Sciatic nerve (tissue), 2 donors: ENCODE measurements at regions of chr22 and their contacts with region 1.

Region 1: GRCh38 chr22:40965936-40966725 is 15.0 kb downstream of the RBX1 start:
- DNase-seq: peak; percentile 32
- ATAC-seq: no peak

Region 2: GRCh38 chr22:40990430-40990829 is 24.3 kb after region 1 on chr22:
- intact Hi-C with region 1: no loop called
- DNase-seq: no peak
- ATAC-seq: no peak

Region 3: DNA sequence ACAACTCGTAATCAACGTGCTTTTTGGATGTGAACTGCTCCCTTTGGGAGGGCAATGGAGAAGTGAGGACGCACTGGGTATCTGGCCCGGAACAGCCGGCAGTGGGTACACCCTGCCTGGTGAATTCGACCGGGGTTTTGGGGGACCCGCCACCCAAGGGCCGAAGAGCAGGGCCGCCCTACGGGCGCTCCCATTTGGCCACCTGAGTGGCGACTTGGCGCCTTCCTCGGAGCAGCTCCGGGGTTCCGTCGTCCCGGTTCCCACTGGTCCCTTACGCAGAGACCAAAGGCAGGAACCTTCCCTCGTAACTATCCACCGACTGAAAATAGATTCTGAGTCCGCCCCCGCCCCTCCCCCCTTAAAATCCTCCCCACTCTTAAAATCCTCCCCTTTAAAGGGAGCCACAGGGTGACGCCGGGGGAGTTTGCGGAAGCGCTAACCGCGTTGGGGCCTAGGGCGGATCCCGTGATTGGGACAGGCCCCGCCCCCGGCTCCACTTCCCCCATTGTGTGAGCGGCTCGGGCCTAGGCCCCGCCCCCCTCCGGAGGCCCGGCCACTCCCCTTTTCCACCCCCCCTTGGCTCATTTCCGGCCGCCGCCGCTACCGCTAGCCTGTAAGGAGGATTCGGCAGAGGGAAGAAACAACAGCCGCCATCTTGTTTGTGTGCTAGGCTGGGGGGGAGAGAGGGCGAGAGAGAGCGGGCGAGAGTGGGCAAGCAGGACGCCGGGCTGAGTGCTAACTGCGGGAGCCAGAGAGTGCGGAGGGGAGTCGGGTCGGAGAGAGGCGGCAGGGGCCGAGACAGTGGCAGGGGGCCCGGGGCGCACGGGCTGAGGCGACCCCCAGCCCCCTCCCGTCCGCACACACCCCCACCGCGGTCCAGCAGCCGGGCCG is 125.2 kb after region 1 on chr22:
- intact Hi-C with region 1: loop called (anchors 10 kb)
- DNase-seq: peak; percentile 100
- ATAC-seq: peak; percentile 99